ENCODE measurements at regions of chr7 and their contacts with region 1.

Region 1: GRCh38 chr7:130069978-130070860 is at the start of gene KLHDC10:
- DNase-seq: peak; percentile 87 to 98 (median 96)
- H3K4me3 ChIP-seq: peak within 1 kb of the TSS; percentile 55
- H3K4me3 Mint-ChIP-seq: peak within 1 kb of the TSS; percentile 81 to 98 (median 91)
- H3K27ac ChIP-seq: peak within 1 kb of the TSS; percentile 70
- H3K27ac Mint-ChIP-seq: peak within 1 kb of the TSS; percentile 84 to 99 (median 94)
- H3K4me1 ChIP-seq: peaks cover 31% of the 10 kb centered on the region
- H3K4me1 Mint-ChIP-seq: peaks cover 37 to 49% (median 49%) of the 10 kb centered on the region in 3 donors
- H3K27me3 ChIP-seq: no peaks in the 10 kb centered on the region
- H3K27me3 Mint-ChIP-seq: peaks cover 0 to 4% of the 10 kb centered on the region in 2 donors
- total RNA-seq, gene KLHDC10: 18.7 to 19.2 TPM

Region 2: GRCh38 chr7:129940329-129940728 is 129.9 kb before region 1 on chr7:
- CTCF ChIA-PET with region 1: no interaction called
- POLR2A ChIA-PET with region 1: no interaction called
- DNase-seq: no peak
- H3K4me3 ChIP-seq: no peak overlapping the region
- H3K4me3 Mint-ChIP-seq: no peak overlapping the region
- H3K27ac ChIP-seq: no peak overlapping the region
- H3K27ac Mint-ChIP-seq: peak overlapping the region in 3 of 8 donors; percentile 9 to 36 (median 30)
- H3K4me1 ChIP-seq: no peaks in the 10 kb centered on the region
- H3K4me1 Mint-ChIP-seq: peaks cover 33 to 47% (median 47%) of the 10 kb centered on the region in 3 donors
- H3K27me3 ChIP-seq: no peaks in the 10 kb centered on the region
- H3K27me3 Mint-ChIP-seq: no peaks in the 10 kb centered on the region

Region 3: DNA sequence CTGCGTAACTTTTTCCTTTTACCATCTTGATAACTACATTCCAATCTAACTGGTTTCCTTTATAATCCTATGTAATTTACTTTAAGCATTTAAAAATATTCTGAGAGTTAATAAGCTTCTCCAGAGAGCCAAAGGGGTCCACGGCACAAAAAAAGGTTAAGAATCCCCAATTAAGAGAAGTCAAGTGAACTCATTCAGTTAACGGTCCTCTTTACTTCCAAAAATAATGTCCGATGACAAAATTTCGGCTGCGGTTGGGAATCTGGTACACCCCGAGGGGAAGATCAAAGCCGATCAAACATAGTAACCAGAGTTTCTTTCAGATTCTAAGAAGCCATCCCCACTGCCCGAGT is 19.5 kb before region 1 on chr7:
- CTCF ChIA-PET with region 1: interaction called, 4 read pairs
- POLR2A ChIA-PET with region 1: interaction called, 10 read pairs
- DNase-seq: no peak
- H3K4me3 ChIP-seq: peak overlapping the region; percentile 95
- H3K4me3 Mint-ChIP-seq: peak overlapping the region; percentile 93 to 99 (median 97)
- H3K27ac ChIP-seq: peak overlapping the region; percentile 82
- H3K27ac Mint-ChIP-seq: peak overlapping the region; percentile 41 to 99 (median 96)
- H3K4me1 ChIP-seq: peaks cover 6% of the 10 kb centered on the region
- H3K4me1 Mint-ChIP-seq: peaks cover 10 to 11% (median 11%) of the 10 kb centered on the region in 3 donors
- H3K27me3 ChIP-seq: no peaks in the 10 kb centered on the region
- H3K27me3 Mint-ChIP-seq: peaks cover 0 to 5% of the 10 kb centered on the region in 2 donors

Region 4: DNA sequence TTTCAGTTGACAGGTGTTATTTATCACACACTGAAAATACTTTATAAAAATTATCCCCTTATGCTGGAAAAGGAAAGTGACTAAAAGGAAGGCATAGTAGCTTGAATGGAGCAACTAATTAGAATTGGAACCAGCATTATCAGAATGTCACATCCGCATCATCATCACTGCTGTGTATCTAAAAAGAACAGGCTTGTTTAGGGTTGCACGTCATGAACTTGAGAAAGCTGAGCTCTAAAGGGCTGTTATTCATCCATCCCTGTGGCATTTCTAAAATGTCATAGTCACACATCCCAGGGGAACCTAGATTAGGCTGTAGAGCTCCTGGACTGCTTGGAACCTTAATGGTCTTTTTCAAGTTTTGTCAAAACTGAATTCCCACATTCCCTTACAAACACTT is 54.5 kb after region 1 on chr7:
- CTCF ChIA-PET with region 1: no interaction called
- POLR2A ChIA-PET with region 1: no interaction called
- DNase-seq: no peak
- H3K4me3 ChIP-seq: no peak overlapping the region
- H3K4me3 Mint-ChIP-seq: no peak overlapping the region
- H3K27ac ChIP-seq: no peak overlapping the region
- H3K27ac Mint-ChIP-seq: no peak overlapping the region
- H3K4me1 ChIP-seq: no peaks in the 10 kb centered on the region
- H3K4me1 Mint-ChIP-seq: no peaks in the 10 kb centered on the region
- H3K27me3 ChIP-seq: no peaks in the 10 kb centered on the region
- H3K27me3 Mint-ChIP-seq: peaks cover 0 to 1% of the 10 kb centered on the region in 2 donors

Region 5: GRCh38 chr7:130758429-130759056 is 688.3 kb after region 1 on chr7:
- CTCF ChIA-PET with region 1: interaction called, 19 read pairs
- POLR2A ChIA-PET with region 1: interaction called, 4 read pairs
- DNase-seq: peak in 2 of 5 donors; percentile 16 to 34
- H3K4me3 ChIP-seq: no peak overlapping the region
- H3K4me3 Mint-ChIP-seq: no peak overlapping the region
- H3K27ac ChIP-seq: no peak overlapping the region
- H3K27ac Mint-ChIP-seq: no peak overlapping the region
- H3K4me1 ChIP-seq: no peaks in the 10 kb centered on the region
- H3K4me1 Mint-ChIP-seq: no peaks in the 10 kb centered on the region
- H3K27me3 ChIP-seq: no peaks in the 10 kb centered on the region
- H3K27me3 Mint-ChIP-seq: peaks cover 0 to 7% of the 10 kb centered on the region in 2 donors

Measured in CD8-positive, alpha-beta memory T cell (primary cell).